Mammary epithelial cell (primary cell): ENCODE measurements at regions of chr17 and their contacts with region 1.

Region 1: DNA sequence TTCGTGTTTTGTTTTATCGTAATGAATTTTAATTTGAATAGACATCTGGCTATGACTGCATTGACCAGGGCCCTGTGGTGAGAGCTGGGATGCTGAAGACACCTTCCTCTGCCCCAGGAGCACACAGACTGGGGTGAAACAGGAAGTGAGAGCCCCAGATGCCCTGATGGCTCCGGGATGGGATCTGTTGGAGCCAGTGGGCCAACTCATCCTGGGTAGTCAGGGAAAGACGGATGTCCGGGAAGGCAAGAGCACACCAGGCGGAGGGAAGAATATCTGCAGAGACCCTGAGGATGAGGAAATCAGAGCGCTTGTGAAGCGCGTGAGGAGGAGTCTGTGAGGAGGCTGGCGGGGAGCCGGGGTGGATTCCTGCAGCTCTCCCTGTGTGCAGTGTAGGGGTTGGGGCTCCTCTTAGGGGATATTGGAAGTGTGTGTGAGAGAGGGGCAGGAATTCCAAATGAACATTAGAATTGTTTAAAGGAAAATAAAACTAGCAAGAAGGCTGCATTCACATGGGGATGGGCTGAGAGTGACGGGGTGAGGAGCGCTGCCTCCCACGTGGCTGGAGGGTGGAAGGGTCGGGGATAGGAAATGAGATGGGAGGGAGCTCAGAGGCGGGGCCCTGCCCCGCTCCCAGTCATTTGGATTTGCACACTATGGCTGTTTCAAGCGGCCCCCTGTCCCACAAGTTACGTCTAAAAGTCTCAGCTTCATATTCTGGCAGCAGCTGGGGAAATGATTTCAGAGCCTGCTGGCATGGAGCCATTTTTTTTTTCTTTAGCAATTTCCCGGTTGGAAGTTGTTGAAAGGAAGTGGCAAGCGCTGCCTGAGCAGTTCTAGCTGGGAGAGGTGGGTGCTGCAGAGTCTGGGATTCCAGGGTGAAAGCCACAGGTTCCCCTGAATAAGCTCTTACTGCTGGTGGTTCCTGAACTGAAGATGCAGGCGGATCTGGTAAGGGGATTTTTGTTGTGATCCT is 71.2 kb upstream of the LGALS9 start:
- DNase-seq: peak; percentile 39
- H3K4me3 ChIP-seq: no peak overlapping the region
- H3K27ac ChIP-seq: no peak overlapping the region
- H3K4me1 ChIP-seq: peaks cover 10% of the 10 kb centered on the region
- H3K27me3 ChIP-seq: no peaks in the 10 kb centered on the region
- CTCF ChIP-seq: no peak

Region 2: GRCh38 chr17:27494192-27495091 is 65.4 kb before region 1 on chr17:
- CTCF ChIA-PET with region 1: no interaction called
- dilution Hi-C with region 1: no loop called
- in situ Hi-C with region 1: loop called in 1 of 2 experiments (anchors 10 kb)
- intact Hi-C with region 1: no loop called
- DNase-seq: peak; percentile 51
- H3K4me3 ChIP-seq: peak overlapping the region; percentile 8 to 34 (median 22)
- H3K27ac ChIP-seq: no peak overlapping the region
- H3K4me1 ChIP-seq: peaks cover 22% of the 10 kb centered on the region
- H3K27me3 ChIP-seq: no peaks in the 10 kb centered on the region
- CTCF ChIP-seq: peak; percentile 42 to 77